ENCODE measurements at regions of chr12 and their contacts with region 1.

Region 1: DNA sequence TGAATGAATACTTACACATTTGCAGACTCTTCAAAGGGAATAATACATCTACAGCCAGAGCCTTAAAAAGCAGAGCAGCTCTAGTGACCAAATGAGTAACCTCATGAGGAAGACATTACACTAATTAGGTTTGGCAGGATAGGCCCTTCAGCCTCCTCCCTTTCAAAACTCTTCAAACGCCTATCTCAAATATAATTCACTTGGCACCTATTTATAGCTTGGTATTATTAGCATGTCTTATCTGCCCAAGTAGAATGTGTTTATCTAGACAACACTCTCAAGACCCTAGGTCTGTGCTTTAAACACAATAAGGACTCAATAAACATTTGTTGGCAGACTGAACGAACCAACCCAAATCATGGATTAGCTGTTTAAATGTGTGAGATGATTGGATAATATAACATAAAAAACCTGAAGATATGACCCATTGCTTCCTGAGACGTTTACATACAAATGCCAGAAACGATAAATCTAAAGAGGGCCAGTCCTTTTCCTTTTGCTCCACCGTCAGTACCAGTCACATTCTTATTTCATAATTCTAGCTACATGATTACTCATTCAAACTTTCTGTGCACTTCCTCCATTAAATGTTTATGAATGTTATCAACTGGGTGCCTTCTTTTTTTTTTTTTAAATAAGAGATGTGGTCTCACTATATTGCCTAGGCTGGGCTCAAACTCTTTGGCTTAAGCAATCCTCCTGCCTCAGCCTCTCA is 123.3 kb downstream of the CEP83 start:
- DNase-seq: no peak
- ATAC-seq: no peak
- H3K4me3 ChIP-seq: no peak overlapping the region
- H3K4me3 Mint-ChIP-seq: no peak overlapping the region
- H3K27ac ChIP-seq: no peak overlapping the region
- H3K27ac Mint-ChIP-seq: no peak overlapping the region
- H3K4me1 ChIP-seq: no peaks in the 10 kb centered on the region
- H3K4me1 Mint-ChIP-seq: no peaks in the 10 kb centered on the region
- H3K27me3 ChIP-seq: no peaks in the 10 kb centered on the region
- H3K27me3 Mint-ChIP-seq: no peaks in the 10 kb centered on the region
- CTCF ChIP-seq: no peak

Region 2: GRCh38 chr12:94305130-94305957 is 31.0 kb before region 1 on chr12:
- CTCF ChIA-PET with region 1: no interaction called
- POLR2A ChIA-PET with region 1: no interaction called
- intact Hi-C with region 1: no loop called
- DNase-seq: peak in 1 of 14 experiments; percentile 4
- ATAC-seq: no peak
- H3K4me3 ChIP-seq: no peak overlapping the region
- H3K4me3 Mint-ChIP-seq: no peak overlapping the region
- H3K27ac ChIP-seq: no peak overlapping the region
- H3K27ac Mint-ChIP-seq: no peak overlapping the region
- H3K4me1 ChIP-seq: no peaks in the 10 kb centered on the region
- H3K4me1 Mint-ChIP-seq: no peaks in the 10 kb centered on the region
- H3K27me3 ChIP-seq: no peaks in the 10 kb centered on the region
- H3K27me3 Mint-ChIP-seq: no peaks in the 10 kb centered on the region
- CTCF ChIP-seq: no peak

Region 3: DNA sequence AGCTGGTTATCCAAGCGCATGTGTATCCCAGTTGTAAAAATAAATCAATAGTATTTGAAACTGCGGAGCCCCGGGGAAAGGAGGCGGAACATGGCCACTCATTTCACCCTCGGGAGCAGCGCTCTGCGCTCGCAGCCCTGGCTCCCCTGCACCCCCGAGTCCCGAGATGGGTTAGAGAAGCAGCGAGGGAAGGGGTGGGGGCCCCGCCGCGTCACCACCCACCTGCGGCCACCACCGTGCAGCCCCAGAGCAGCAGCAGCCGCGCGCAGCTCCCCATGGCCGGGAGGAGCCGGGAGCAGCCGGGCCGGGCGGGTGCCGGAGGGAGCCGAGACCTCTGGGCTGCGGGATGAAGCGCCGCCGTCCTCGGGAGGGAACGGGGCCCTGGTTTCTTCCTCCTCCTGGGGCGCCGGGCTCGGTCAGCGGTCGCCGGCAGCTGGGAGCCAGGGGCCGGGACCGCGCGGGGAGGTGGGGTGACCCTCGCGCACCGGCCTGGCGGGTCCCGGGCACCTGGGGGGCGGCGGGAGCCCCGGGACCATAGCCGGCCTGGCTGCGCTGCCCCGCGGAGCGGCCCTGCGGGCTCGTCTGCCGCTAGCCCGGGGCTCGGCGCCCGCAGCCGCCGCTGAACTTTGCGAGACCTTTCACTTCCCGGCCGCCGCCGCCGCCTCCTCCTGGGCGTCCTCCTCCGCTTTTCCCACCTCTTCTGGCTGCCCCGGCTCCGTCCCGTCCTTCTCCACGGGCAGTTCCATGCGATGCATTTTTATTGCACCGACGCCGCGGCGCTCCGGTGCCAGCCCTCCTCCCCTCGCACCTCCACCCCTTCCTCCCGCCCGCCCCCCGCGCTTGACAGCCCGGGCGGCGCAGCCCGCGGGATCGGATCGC is 1453.9 kb after region 1 on chr12 and contains the start of gene NTN4:
- CTCF ChIA-PET with region 1: no interaction called
- POLR2A ChIA-PET with region 1: no interaction called
- intact Hi-C with region 1: loop called in 1 of 2 experiments (anchors 5 kb)
- DNase-seq: peak in 6 of 14 experiments; percentile 12 to 53 (median 28)
- ATAC-seq: peak; percentile 66
- H3K4me3 ChIP-seq: peak within 1 kb of the TSS; percentile 52
- H3K4me3 Mint-ChIP-seq: peak within 1 kb of the TSS; percentile 86
- H3K27ac ChIP-seq: no peak within 1 kb of the TSS
- H3K27ac Mint-ChIP-seq: peak within 1 kb of the TSS; percentile 47
- H3K4me1 ChIP-seq: peaks cover 21% of the 10 kb centered on the region
- H3K4me1 Mint-ChIP-seq: peaks cover 8% of the 10 kb centered on the region
- H3K27me3 ChIP-seq: peaks cover 30 to 64% of the 10 kb centered on the region in 2 experiments
- H3K27me3 Mint-ChIP-seq: peaks cover 80% of the 10 kb centered on the region
- CTCF ChIP-seq: no peak
- total RNA-seq, gene NTN4: 0.47 to 0.71 TPM

Measured in CD4-positive, alpha-beta T cell (primary cell).